ENCODE measurements at regions of chr1 and their contacts with region 1.

Region 1: GRCh38 chr1:205121660-205122488 is at the start of gene RBBP5:
- DNase-seq: peak; percentile 95 to 97
- ATAC-seq: peak; percentile 98 to 99 (median 99)
- H3K4me3 ChIP-seq: peak within 1 kb of the TSS; percentile 93
- H3K27ac ChIP-seq: peak within 1 kb of the TSS; percentile 93
- H3K4me1 ChIP-seq: peaks cover 23% of the 10 kb centered on the region
- H3K27me3 ChIP-seq: no peaks in the 10 kb centered on the region
- CTCF ChIP-seq: peak; percentile 61
- total RNA-seq, gene RBBP5: 10.7 to 15.2 (median 13.3) TPM

Region 2: GRCh38 chr1:204971517-204972336 is 150.1 kb before region 1 on chr1:
- intact Hi-C with region 1: no loop called
- DNase-seq: no peak
- ATAC-seq: no peak
- H3K4me3 ChIP-seq: no peak overlapping the region
- H3K27ac ChIP-seq: no peak overlapping the region
- H3K4me1 ChIP-seq: no peaks in the 10 kb centered on the region
- H3K27me3 ChIP-seq: peaks cover 0 to 14% (median 2%) of the 10 kb centered on the region in 3 donors
- CTCF ChIP-seq: no peak

Region 3: GRCh38 chr1:205020466-205020865 is 101.4 kb before region 1 on chr1:
- intact Hi-C with region 1: no loop called
- DNase-seq: no peak
- ATAC-seq: no peak
- H3K4me3 ChIP-seq: no peak overlapping the region
- H3K27ac ChIP-seq: no peak overlapping the region
- H3K4me1 ChIP-seq: no peaks in the 10 kb centered on the region
- H3K27me3 ChIP-seq: peaks cover 0 to 2% (median 0%) of the 10 kb centered on the region in 3 donors
- CTCF ChIP-seq: no peak

Region 4: DNA sequence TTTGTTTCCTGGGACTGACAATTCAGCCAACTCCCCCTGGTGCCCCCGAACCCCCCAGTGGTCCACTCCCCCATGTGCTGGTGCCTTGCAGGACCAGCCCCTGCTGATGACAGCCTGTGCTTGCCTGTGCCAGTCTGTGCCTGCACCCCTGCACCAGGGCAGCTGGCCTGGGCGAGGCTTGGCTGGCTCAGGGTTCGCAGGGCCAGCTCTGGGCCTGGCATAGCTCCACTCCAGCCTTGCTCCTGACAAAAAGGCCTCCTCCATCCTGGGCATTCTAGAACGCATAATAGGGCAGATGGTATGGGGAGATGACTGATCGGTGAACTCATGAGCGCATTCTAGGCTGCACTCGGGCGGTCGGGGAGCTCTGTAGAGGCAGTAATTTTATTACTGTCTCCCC is 73.5 kb before region 1 on chr1:
- intact Hi-C with region 1: no loop called
- DNase-seq: no peak
- ATAC-seq: no peak
- H3K4me3 ChIP-seq: no peak overlapping the region
- H3K27ac ChIP-seq: no peak overlapping the region
- H3K4me1 ChIP-seq: no peaks in the 10 kb centered on the region
- H3K27me3 ChIP-seq: peaks cover 0 to 52% (median 20%) of the 10 kb centered on the region in 3 donors
- CTCF ChIP-seq: no peak

Region 5: GRCh38 chr1:205211169-205211838 is 89.4 kb after region 1 on chr1 and contains the start of gene DSTYK:
- intact Hi-C with region 1: loop called in 1 of 2 experiments (anchors 5 kb)
- DNase-seq: peak; percentile 94 to 96
- ATAC-seq: peak; percentile 93 to 97 (median 95)
- H3K4me3 ChIP-seq: peak within 1 kb of the TSS; percentile 88
- H3K27ac ChIP-seq: peak within 1 kb of the TSS; percentile 94
- H3K4me1 ChIP-seq: peaks cover 27% of the 10 kb centered on the region
- H3K27me3 ChIP-seq: no peaks in the 10 kb centered on the region
- CTCF ChIP-seq: no peak
- total RNA-seq, gene DSTYK: 10.0 to 22.6 (median 13.9) TPM

Measured in psoas muscle (tissue), 8 donors.